ENCODE measurements at regions of chr6 and their contacts with region 1.

Region 1: GRCh38 chr6:13709689-13710551 is 1.7 kb downstream of the RANBP9 start:
- DNase-seq: no peak
- ATAC-seq: peak in 2 of 4 donors; percentile 9 to 28
- H3K4me3 ChIP-seq: peak overlapping the region; percentile 72 to 89 (median 84)
- H3K27ac ChIP-seq: peak overlapping the region; percentile 53 to 97 (median 90)
- H3K4me1 ChIP-seq: peaks cover 14 to 26% (median 19%) of the 10 kb centered on the region in 3 donors
- H3K27me3 ChIP-seq: no peaks in the 10 kb centered on the region
- CTCF ChIP-seq: no peak

Region 2: GRCh38 chr6:13624871-13625288 is 85.0 kb before region 1 on chr6:
- intact Hi-C with region 1: loop called in 2 of 3 experiments (anchors 10 kb)
- DNase-seq: no peak
- ATAC-seq: peak in 3 of 4 donors; percentile 69 to 83 (median 75)
- H3K4me3 ChIP-seq: no peak overlapping the region
- H3K27ac ChIP-seq: no peak overlapping the region
- H3K4me1 ChIP-seq: no peaks in the 10 kb centered on the region
- H3K27me3 ChIP-seq: no peaks in the 10 kb centered on the region
- CTCF ChIP-seq: peak in 2 of 4 donors; percentile 25 to 31

Region 3: DNA sequence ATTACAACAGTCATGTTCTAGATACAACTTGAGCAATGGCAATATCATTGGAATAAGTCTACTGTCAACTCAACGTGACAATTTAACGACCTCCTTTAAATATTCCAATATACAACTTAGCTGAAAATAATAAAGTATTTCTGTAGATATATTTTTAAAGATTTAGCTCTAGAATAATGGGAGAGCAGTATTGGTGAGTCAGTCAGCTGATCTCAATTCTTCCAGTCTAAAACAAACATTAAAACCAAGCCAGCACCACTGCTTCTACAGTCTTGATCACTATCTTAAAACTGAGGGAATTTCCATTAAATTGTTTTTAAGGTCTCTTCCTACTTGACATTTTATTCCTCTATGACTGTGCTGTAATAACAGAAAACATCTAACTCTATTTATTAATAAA is 56.6 kb before region 1 on chr6:
- intact Hi-C with region 1: loop called in 1 of 3 experiments (anchors 10 kb)
- DNase-seq: no peak
- ATAC-seq: peak; percentile 61 to 89 (median 72)
- H3K4me3 ChIP-seq: no peak overlapping the region
- H3K27ac ChIP-seq: no peak overlapping the region
- H3K4me1 ChIP-seq: peaks cover 0 to 12% (median 11%) of the 10 kb centered on the region in 3 donors
- H3K27me3 ChIP-seq: no peaks in the 10 kb centered on the region
- CTCF ChIP-seq: no peak